CD4-positive, alpha-beta memory T cell (primary cell): ENCODE measurements at regions of chr2 and their contacts with region 1.

Region 1: DNA sequence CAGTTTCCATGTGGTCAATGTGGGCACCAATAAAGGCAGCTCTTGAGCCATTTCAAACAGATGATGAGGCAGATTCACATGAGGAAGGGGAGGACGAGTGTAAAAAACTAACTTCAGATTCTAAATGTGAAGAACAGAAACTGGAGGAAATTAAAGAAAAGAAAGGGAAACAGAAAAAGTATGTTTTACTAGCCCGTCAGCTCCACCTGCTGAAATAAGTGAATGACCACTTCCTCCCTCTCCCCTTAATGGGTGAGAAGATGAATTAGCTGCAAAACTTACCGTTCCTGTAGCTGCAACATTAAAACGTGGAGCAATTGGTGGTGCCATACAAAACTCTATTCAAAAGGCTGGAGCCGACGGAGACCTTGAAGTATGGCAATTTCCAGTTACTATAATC is 203.5 kb downstream of the UXS1 start:
- DNase-seq: no peak
- H3K4me3 ChIP-seq: no peak overlapping the region
- H3K4me3 Mint-ChIP-seq: peak overlapping the region in 2 of 8 donors; percentile 3 to 66
- H3K27ac ChIP-seq: no peak overlapping the region
- H3K27ac Mint-ChIP-seq: no peak overlapping the region
- H3K4me1 ChIP-seq: peaks cover 29% of the 10 kb centered on the region
- H3K4me1 Mint-ChIP-seq: peaks cover 19 to 57% (median 42%) of the 10 kb centered on the region in 4 donors
- H3K27me3 ChIP-seq: no peaks in the 10 kb centered on the region
- H3K27me3 Mint-ChIP-seq: no peaks in the 10 kb centered on the region

Region 2: GRCh38 chr2:106053116-106053515 is 62.5 kb after region 1 on chr2:
- CTCF ChIA-PET with region 1: no interaction called
- POLR2A ChIA-PET with region 1: no interaction called
- intact Hi-C with region 1: loop called (anchors 5 kb)
- DNase-seq: peak in 4 of 5 donors; percentile 31 to 39 (median 36)
- H3K4me3 ChIP-seq: no peak overlapping the region
- H3K4me3 Mint-ChIP-seq: peak overlapping the region; percentile 33 to 85 (median 71)
- H3K27ac ChIP-seq: no peak overlapping the region
- H3K27ac Mint-ChIP-seq: peak overlapping the region in 4 of 7 donors; percentile 21 to 82 (median 71)
- H3K4me1 ChIP-seq: peaks cover 65% of the 10 kb centered on the region
- H3K4me1 Mint-ChIP-seq: peaks cover 48 to 72% (median 63%) of the 10 kb centered on the region in 4 donors
- H3K27me3 ChIP-seq: no peaks in the 10 kb centered on the region
- H3K27me3 Mint-ChIP-seq: no peaks in the 10 kb centered on the region